Common myeloid progenitor, CD34-positive (primary cell): ENCODE measurements at regions of chr5 and their contacts with region 1.

Region 1: GRCh38 chr5:174935854-174936474 is 211.6 kb downstream of the MSX2 start:
- DNase-seq: peak; percentile 18 to 41 (median 26)
- H3K4me3 ChIP-seq: no peak overlapping the region
- H3K27ac ChIP-seq: no peak overlapping the region
- H3K4me1 ChIP-seq: no peaks in the 10 kb centered on the region
- H3K27me3 ChIP-seq: peaks cover 0 to 18% (median 4%) of the 10 kb centered on the region in 5 experiments

Region 2: DNA sequence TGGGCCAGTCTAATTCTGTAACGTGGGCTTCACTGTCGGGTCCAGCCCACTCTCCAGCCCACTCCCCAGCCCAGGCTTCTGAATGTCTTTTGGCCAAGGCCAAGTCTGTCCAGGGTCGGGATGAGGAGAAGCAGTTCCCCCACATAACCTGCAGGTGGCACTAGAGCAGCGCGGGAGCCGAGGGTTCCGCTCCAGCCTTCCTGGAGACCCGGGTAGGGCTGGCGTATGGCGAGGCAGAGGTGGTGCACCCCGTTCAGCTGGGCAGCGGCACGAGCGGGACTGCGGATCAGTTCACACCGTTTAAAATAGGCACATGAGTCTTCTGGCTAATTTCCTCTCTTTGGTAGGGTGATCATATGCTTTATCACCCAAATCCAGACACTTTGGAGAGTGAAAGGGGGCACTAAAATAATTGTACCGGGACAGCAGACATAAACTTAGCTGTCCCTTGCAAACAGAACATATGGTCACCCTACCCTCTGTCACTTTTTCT is 25.7 kb before region 1 on chr5:
- CTCF ChIA-PET with region 1: interaction called, 13 read pairs
- POLR2A ChIA-PET with region 1: no interaction called
- DNase-seq: peak; percentile 48 to 69 (median 67)
- H3K4me3 ChIP-seq: peak overlapping the region in 1 of 7 experiments; percentile 52
- H3K27ac ChIP-seq: no peak overlapping the region
- H3K4me1 ChIP-seq: peaks cover 0 to 4% (median 1%) of the 10 kb centered on the region in 4 experiments
- H3K27me3 ChIP-seq: peaks cover 0 to 8% (median 2%) of the 10 kb centered on the region in 5 experiments